Left cardiac atrium (tissue), 4 donors: ENCODE measurements at regions of chr4 and their contacts with region 1.

Region 1: DNA sequence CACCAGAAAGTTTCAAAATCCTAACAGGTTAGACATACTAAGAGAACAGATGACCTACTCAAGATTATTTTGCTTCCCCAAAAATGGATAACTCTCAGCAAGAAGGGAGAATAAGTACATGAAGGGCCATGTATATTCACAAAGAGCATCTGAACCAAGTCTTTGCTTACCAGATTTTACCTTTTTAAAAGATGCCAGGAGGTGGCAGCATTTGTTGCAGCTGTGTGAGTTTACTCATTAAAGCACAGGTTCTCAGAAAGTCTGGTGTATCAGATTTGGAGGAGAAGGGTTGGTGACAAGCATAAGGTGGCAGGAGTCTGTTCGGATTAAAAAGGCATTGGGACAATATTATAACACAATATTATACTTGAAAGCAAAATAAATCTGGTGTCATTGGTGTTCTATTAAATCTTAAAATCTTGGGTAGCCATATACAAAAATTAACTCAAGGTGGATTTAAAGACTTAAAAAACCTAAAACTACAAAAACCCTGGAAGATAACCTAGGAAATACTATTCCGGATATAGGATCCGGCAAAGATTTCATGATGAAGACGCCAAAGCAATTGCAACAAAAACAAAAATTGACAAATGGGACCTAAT is 51.3 kb upstream of the NFKB1 start:
- DNase-seq: no peak
- ATAC-seq: peak; percentile 57 to 60

Region 2: GRCh38 chr4:102598086-102598761 is 148.4 kb after region 1 on chr4:
- intact Hi-C with region 1: loop called in 1 of 2 experiments (anchors 10 kb)
- DNase-seq: no peak
- ATAC-seq: peak; percentile 53 to 67

Region 3: GRCh38 chr4:102620697-102621497 is 171.0 kb after region 1 on chr4:
- intact Hi-C with region 1: loop called (anchors 5 to 10 kb)
- DNase-seq: no peak
- ATAC-seq: peak; percentile 90 to 93

Region 4: DNA sequence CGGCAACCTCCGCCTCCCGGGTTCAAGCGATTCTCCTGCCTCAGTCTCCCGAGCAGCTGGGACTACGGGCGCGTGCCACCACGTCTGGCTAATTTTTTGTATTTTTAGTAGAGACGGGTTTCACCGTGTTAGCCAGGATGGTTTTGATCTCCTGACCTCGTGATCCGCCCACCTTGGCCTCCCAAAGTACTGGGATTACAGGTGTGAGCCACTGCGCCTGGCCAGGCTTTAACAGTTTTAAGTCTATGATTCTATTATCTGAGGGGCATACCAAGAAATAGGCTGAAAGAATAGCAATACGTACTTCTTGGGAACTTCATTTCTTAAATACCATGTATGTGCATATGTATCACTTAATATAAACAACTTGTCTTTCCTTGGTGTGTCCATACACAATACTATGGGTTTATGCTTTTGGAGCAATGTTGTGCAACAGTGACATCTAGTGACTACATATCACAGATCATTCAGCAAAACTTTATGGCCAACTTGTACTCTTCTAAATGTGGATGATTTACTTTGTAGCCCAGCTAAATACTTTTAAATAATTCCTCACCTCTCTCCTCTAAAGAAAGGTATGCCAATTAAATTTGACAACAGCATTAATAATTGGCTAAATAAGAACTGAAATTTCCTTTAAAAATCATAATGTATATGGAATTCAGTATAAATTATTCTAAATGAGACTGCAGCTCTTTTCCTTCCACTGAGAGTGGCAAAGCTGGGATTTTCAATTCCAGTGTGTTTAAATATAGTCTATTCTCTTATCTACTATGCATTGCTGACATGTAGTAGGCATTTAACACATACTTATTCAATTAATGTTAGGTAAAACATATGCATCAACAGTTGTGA is 559.2 kb after region 1 on chr4:
- intact Hi-C with region 1: loop called (anchors 5 to 10 kb)
- DNase-seq: no peak
- ATAC-seq: peak; percentile 66 to 74

Region 5: DNA sequence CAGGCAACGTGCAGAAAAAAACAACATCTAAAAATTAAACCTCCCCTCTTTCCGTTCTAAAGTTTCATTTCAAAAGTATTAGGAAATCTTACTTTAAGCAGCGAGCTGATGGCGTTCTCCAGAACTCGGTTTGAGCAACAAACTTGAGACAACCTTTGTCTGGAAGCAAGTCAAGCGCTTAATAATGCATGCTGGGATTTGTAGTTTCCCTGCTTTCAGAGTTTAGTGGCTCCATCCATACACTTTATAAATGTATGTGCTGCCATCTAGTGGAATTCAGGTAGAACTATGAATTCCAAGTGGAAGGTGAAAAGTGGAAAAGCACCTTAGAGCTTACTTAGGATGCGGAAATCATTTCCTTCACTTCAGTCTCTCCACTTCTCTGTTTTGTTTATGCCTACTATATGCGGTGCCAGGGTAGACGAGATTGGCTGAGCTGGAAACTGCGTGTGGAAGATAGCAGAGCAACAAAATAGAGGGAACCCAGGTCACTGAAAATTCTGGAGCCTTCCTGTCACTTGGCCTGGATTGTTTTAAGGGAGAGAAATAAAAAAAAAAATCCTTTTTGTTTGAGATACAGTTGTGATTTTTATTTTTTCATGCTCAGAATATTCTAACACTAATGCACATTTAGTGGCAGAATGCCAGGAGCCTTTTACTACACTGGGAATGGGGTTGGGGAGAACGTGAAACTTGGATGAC is 650.0 kb after region 1 on chr4 and contains the start of gene BDH2:
- intact Hi-C with region 1: loop called (anchors 5 to 10 kb)
- DNase-seq: peak; percentile 27
- ATAC-seq: peak; percentile 97 to 98
- total RNA-seq, gene BDH2: 28.0 to 36.7 TPM